CD4-positive, alpha-beta T cell (primary cell): ENCODE measurements at regions of chr12 and their contacts with region 1.

Region 1: DNA sequence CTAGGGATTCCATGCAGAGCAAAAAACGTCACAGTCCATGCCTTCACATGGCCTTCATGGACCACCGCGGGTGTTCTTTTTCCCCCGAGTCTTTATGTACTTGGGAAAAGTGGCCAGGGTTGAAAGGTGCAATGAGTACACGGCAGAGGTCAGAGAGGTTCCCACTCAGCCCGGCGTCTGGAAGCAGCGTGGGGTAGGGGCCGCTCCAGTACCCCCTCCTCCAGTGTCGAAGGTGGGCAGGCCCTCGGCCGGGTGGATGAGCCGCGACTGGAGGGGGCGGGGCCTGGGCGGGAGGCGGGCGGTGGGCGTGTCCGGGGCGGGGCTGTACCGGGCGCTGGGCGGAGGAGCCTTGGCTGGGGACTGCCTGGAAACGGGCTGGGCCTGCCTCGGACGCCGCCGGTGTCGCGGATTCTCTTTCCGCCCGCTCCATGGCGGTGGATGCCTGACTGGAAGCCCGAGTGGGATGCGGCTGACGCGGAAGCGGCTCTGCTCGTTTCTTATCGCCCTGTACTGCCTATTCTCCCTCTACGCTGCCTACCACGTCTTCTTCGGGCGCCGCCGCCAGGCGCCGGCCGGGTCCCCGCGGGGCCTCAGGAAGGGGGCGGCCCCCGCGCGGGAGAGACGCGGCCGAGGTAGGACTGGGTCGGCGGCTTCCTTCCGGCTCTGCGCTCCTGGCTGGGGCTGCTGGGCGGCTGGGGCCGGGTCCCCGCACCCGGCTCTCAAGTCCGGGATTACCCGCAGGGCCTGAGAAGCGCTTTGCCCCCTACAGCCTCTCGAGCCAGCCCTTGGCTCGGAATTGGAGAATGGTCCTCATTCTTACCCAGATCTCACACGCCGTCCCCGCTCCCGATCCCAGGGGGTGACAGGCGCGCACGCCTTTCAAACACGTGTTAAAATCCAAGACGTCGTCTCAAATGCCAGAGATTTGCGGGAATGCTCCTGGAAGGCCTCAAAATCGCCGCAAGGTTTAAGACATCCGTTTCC is at the start of gene RXYLT1:
- DNase-seq: peak; percentile 70 to 90 (median 80)
- ATAC-seq: peak; percentile 90
- H3K4me3 ChIP-seq: peak within 1 kb of the TSS; percentile 83
- H3K4me3 Mint-ChIP-seq: peak within 1 kb of the TSS; percentile 97
- H3K27ac ChIP-seq: peak within 1 kb of the TSS; percentile 83 to 84
- H3K27ac Mint-ChIP-seq: peak within 1 kb of the TSS; percentile 86
- H3K4me1 ChIP-seq: peaks cover 11% of the 10 kb centered on the region
- H3K4me1 Mint-ChIP-seq: peaks cover 46% of the 10 kb centered on the region
- H3K27me3 ChIP-seq: no peaks in the 10 kb centered on the region
- H3K27me3 Mint-ChIP-seq: no peaks in the 10 kb centered on the region
- CTCF ChIP-seq: no peak
- total RNA-seq, gene RXYLT1: 6.2 to 6.3 TPM

Region 2: DNA sequence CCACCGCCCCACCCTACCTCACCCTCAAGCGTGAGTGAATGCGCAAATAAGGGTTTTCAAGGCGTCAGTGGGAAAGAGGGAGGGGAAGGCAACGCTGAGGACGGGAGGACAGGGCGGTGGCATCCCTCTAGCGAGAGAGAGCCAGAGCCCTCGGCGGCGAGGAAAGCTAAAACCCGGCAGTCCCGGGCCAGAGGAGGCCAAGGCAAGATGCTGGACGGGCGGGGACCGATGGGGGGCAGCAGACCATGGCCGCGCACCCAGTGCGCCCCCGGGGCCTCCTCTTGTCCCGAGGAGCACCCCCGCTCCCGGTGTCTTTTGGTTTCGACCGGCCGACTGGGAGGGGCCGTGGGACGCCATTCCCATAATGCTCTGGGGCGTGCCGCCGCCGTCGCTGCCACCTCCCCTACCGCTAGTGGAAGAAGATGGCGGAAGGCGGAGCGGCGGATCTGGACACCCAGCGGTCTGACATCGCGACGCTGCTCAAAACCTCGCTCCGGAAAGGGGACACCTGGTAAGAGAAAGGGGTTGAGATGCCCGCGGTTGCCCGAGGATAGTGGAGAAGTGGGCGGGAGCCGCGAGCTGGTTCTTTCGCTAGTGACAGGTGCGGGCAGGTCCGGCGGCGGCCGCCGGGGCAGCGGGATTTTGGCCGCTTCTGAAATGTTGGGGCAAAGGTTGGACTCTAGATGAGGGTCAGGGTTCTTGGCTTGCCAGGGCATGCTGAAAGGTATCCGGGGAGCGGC is 1519.6 kb before region 1 on chr12 and contains the start of gene USP15:
- CTCF ChIA-PET with region 1: no interaction called
- POLR2A ChIA-PET with region 1: no interaction called
- intact Hi-C with region 1: loop called in 1 of 2 experiments (anchors 5 kb)
- DNase-seq: peak; percentile 93 to 97 (median 95)
- ATAC-seq: peak; percentile 78
- H3K4me3 ChIP-seq: peak within 1 kb of the TSS; percentile 81
- H3K4me3 Mint-ChIP-seq: peak within 1 kb of the TSS; percentile 98
- H3K27ac ChIP-seq: peak within 1 kb of the TSS; percentile 97
- H3K27ac Mint-ChIP-seq: peak within 1 kb of the TSS; percentile 98
- H3K4me1 ChIP-seq: peaks cover 13% of the 10 kb centered on the region
- H3K4me1 Mint-ChIP-seq: peaks cover 77% of the 10 kb centered on the region
- H3K27me3 ChIP-seq: no peaks in the 10 kb centered on the region
- H3K27me3 Mint-ChIP-seq: no peaks in the 10 kb centered on the region
- CTCF ChIP-seq: peak; percentile 62
- total RNA-seq, gene USP15: 212 to 218 TPM

Region 3: GRCh38 chr12:62466594-62467491 is 1312.9 kb before region 1 on chr12 and contains the start of gene MON2:
- CTCF ChIA-PET with region 1: no interaction called
- POLR2A ChIA-PET with region 1: no interaction called
- intact Hi-C with region 1: loop called in 1 of 2 experiments (anchors 5 kb)
- DNase-seq: peak; percentile 68 to 94 (median 82)
- ATAC-seq: peak; percentile 94
- H3K4me3 ChIP-seq: peak within 1 kb of the TSS; percentile 72
- H3K4me3 Mint-ChIP-seq: peak within 1 kb of the TSS; percentile 90
- H3K27ac ChIP-seq: peak within 1 kb of the TSS; percentile 82 to 85
- H3K27ac Mint-ChIP-seq: peak within 1 kb of the TSS; percentile 90
- H3K4me1 ChIP-seq: peaks cover 23% of the 10 kb centered on the region
- H3K4me1 Mint-ChIP-seq: peaks cover 31% of the 10 kb centered on the region
- H3K27me3 ChIP-seq: no peaks in the 10 kb centered on the region
- H3K27me3 Mint-ChIP-seq: no peaks in the 10 kb centered on the region
- CTCF ChIP-seq: no peak
- total RNA-seq, gene MON2: 51.8 to 52.6 TPM

Region 4: DNA sequence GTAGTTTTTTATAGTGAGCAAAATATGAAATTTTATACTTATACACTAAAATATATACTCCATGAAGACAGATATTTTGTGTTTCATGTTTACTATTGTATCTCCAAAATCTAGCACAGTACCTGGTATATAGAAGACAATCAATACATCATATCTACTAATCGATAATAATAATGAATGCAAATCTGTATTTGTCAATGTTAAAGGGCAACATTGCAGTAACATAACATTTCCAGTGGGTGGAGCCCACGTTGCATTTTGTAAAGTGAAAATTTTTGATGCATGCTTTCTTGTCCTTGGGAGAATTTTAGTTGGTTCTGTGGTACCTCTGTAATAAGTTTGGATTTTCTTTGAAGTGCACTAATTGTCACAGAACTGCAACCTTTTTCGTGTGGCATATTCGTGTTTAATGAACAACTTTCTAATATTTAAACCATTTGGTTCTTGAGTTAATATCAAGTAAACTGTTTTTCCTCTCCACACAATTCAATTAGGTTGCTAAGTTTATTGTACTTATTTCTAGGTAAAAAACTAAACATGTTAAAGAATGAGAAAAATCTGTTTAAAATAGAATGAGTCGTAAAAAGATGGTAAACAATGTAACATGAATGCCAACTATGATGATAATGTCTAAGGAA is 676.2 kb before region 1 on chr12:
- CTCF ChIA-PET with region 1: no interaction called
- POLR2A ChIA-PET with region 1: no interaction called
- intact Hi-C with region 1: no loop called
- DNase-seq: peak in 4 of 14 experiments; percentile 3 to 29 (median 12)
- ATAC-seq: no peak
- H3K4me3 ChIP-seq: no peak overlapping the region
- H3K4me3 Mint-ChIP-seq: no peak overlapping the region
- H3K27ac ChIP-seq: no peak overlapping the region
- H3K27ac Mint-ChIP-seq: no peak overlapping the region
- H3K4me1 ChIP-seq: no peaks in the 10 kb centered on the region
- H3K4me1 Mint-ChIP-seq: no peaks in the 10 kb centered on the region
- H3K27me3 ChIP-seq: no peaks in the 10 kb centered on the region
- H3K27me3 Mint-ChIP-seq: peaks cover 6% of the 10 kb centered on the region
- CTCF ChIP-seq: peak; percentile 82

Region 5: GRCh38 chr12:63882844-63883243 is 103.1 kb after region 1 on chr12:
- CTCF ChIA-PET with region 1: no interaction called
- POLR2A ChIA-PET with region 1: no interaction called
- intact Hi-C with region 1: no loop called
- DNase-seq: no peak
- ATAC-seq: no peak
- H3K4me3 ChIP-seq: no peak overlapping the region
- H3K4me3 Mint-ChIP-seq: no peak overlapping the region
- H3K27ac ChIP-seq: no peak overlapping the region
- H3K27ac Mint-ChIP-seq: no peak overlapping the region
- H3K4me1 ChIP-seq: no peaks in the 10 kb centered on the region
- H3K4me1 Mint-ChIP-seq: no peaks in the 10 kb centered on the region
- H3K27me3 ChIP-seq: no peaks in the 10 kb centered on the region
- H3K27me3 Mint-ChIP-seq: peaks cover 19% of the 10 kb centered on the region
- CTCF ChIP-seq: no peak

Region 6: GRCh38 chr12:63917864-63918799 is 138.3 kb after region 1 on chr12:
- CTCF ChIA-PET with region 1: no interaction called
- POLR2A ChIA-PET with region 1: no interaction called
- intact Hi-C with region 1: no loop called
- DNase-seq: peak in 3 of 14 experiments; percentile 21 to 66 (median 52)
- ATAC-seq: no peak
- H3K4me3 ChIP-seq: no peak overlapping the region
- H3K4me3 Mint-ChIP-seq: no peak overlapping the region
- H3K27ac ChIP-seq: no peak overlapping the region
- H3K27ac Mint-ChIP-seq: no peak overlapping the region
- H3K4me1 ChIP-seq: no peaks in the 10 kb centered on the region
- H3K4me1 Mint-ChIP-seq: no peaks in the 10 kb centered on the region
- H3K27me3 ChIP-seq: no peaks in the 10 kb centered on the region
- H3K27me3 Mint-ChIP-seq: no peaks in the 10 kb centered on the region
- CTCF ChIP-seq: no peak

Region 7: GRCh38 chr12:64222009-64222765 is 442.4 kb after region 1 on chr12 and contains the start of gene KICS2:
- CTCF ChIA-PET with region 1: no interaction called
- POLR2A ChIA-PET with region 1: no interaction called
- intact Hi-C with region 1: loop called in 1 of 2 experiments (anchors 5 kb)
- DNase-seq: peak; percentile 79 to 97 (median 88)
- ATAC-seq: peak; percentile 85
- H3K4me3 ChIP-seq: peak within 1 kb of the TSS; percentile 78
- H3K4me3 Mint-ChIP-seq: peak within 1 kb of the TSS; percentile 97
- H3K27ac ChIP-seq: peak within 1 kb of the TSS; percentile 84 to 98
- H3K27ac Mint-ChIP-seq: peak within 1 kb of the TSS; percentile 95
- H3K4me1 ChIP-seq: peaks cover 13% of the 10 kb centered on the region
- H3K4me1 Mint-ChIP-seq: peaks cover 41% of the 10 kb centered on the region
- H3K27me3 ChIP-seq: no peaks in the 10 kb centered on the region
- H3K27me3 Mint-ChIP-seq: peaks cover 12% of the 10 kb centered on the region
- CTCF ChIP-seq: no peak
- total RNA-seq, gene KICS2: 13.6 to 14.0 TPM

Region 8: DNA sequence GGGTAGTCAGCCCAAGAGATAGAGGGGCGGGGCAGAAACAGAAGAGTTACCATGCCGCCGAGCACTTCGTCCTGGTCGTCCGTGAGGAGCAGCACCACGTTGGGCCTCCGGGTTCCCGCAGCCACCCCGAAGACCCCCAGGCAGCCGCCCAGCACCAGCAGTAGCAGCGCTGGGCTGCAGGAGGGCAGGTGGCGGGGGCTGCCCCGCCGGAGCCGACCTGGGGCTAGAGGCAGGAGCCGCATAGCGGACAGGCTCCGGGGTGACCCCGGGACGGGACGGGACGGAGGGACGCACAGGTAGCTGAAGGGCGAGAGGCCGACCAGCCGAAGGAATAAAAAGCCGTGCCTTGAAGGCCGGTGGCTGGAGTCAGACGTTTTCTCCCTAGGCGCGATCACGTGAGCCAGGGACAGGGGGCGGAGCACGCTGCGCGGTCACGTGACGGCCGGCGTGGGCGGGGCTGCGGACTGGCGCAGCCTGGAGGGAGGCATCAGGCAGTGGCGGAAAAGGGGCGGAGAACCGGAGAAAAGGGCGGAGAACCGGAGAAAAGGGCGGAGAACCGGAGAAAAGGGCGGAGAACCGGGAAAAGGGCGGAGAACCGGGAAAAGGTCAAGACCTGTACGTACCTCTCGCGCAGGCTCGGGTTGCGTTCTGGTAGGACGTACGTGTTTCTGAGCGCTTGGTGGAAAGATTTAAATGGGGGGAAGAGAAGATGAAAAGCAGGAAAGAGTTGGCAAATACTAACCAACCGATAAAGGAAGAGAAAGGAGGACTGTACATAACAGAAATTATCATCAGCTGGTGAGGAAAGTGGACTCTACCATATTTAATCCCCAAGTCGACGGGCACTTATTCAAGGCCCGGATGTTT is 979.5 kb after region 1 on chr12 and contains the start of gene GNS:
- CTCF ChIA-PET with region 1: no interaction called
- POLR2A ChIA-PET with region 1: no interaction called
- intact Hi-C with region 1: loop called in 1 of 2 experiments (anchors 5 kb)
- DNase-seq: peak; percentile 81 to 95 (median 90)
- ATAC-seq: peak; percentile 87
- H3K4me3 ChIP-seq: peak within 1 kb of the TSS; percentile 62
- H3K4me3 Mint-ChIP-seq: peak within 1 kb of the TSS; percentile 99
- H3K27ac ChIP-seq: peak within 1 kb of the TSS; percentile 52 to 54
- H3K27ac Mint-ChIP-seq: peak within 1 kb of the TSS; percentile 85
- H3K4me1 ChIP-seq: peaks cover 23% of the 10 kb centered on the region
- H3K4me1 Mint-ChIP-seq: peaks cover 54% of the 10 kb centered on the region
- H3K27me3 ChIP-seq: no peaks in the 10 kb centered on the region
- H3K27me3 Mint-ChIP-seq: no peaks in the 10 kb centered on the region
- CTCF ChIP-seq: no peak
- total RNA-seq, gene GNS: 8.7 to 10.0 TPM